Right ventricle myocardium inferior (tissue), 1 donor: ENCODE measurements at regions of chr11 and their contacts with region 1.

Region 1: DNA sequence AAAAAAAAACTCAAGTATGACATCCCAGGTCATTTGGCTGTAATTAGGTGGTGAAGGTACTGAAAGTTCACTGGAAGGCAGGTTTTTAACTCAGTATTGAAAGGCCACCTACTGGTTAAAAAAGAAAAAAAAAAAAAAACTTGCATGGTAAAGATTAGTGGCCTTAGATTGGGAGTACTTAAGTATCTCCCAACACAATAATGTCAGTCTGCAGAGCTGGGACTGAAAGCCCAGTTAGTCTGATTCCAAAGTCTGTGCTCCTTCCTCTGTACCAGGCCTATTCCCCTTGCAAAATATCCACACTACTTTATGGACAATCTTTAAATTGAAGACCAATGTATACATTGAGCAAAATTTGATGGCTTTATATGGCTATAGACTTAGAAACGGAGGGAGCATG is 85.5 kb downstream of the NOX4 start:
- DNase-seq: no peak
- ATAC-seq: no peak

Region 2: DNA sequence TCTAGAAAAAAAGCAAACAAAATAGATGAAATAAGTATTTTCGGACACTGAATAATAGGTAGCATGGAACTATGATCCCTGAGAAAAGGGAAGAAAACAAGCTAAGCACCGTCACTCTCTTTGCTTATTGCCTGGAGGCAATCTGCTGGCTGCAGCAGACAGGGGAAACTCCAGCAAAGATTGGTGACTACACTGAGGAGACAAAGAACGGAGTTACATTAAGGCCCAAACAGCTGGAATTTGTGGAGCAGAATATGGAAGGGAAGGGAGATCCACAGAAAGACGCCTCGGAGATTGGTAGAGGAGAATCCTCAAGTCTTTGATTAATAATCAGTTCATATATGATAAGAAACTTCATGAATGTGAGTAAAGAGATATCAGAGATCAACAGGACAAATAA is 77.7 kb before region 1 on chr11:
- intact Hi-C with region 1: loop called (anchors 5 kb)
- DNase-seq: no peak
- ATAC-seq: no peak